ENCODE measurements at regions of chr11 and their contacts with region 1.

Region 1: GRCh38 chr11:102225689-102226568 is 91.4 kb upstream of the BIRC3 start:
- DNase-seq: peak; percentile 87
- H3K4me3 ChIP-seq: no peak overlapping the region
- H3K27ac ChIP-seq: peak overlapping the region; percentile 54
- H3K4me1 ChIP-seq: peaks cover 24% of the 10 kb centered on the region
- H3K27me3 ChIP-seq: no peaks in the 10 kb centered on the region
- CTCF ChIP-seq: no peak
- POLR2A ChIP-seq: peak; percentile 40

Region 2: GRCh38 chr11:102036757-102037156 is 189.2 kb before region 1 on chr11:
- CTCF ChIA-PET with region 1: no interaction called
- POLR2A ChIA-PET with region 1: no interaction called
- dilution Hi-C with region 1: no loop called
- intact Hi-C with region 1: no loop called
- DNase-seq: no peak
- H3K4me3 ChIP-seq: no peak overlapping the region
- H3K27ac ChIP-seq: no peak overlapping the region
- H3K4me1 ChIP-seq: no peaks in the 10 kb centered on the region
- H3K27me3 ChIP-seq: peaks cover 0 to 2% of the 10 kb centered on the region in 2 experiments
- CTCF ChIP-seq: no peak
- POLR2A ChIP-seq: no peak

Region 3: DNA sequence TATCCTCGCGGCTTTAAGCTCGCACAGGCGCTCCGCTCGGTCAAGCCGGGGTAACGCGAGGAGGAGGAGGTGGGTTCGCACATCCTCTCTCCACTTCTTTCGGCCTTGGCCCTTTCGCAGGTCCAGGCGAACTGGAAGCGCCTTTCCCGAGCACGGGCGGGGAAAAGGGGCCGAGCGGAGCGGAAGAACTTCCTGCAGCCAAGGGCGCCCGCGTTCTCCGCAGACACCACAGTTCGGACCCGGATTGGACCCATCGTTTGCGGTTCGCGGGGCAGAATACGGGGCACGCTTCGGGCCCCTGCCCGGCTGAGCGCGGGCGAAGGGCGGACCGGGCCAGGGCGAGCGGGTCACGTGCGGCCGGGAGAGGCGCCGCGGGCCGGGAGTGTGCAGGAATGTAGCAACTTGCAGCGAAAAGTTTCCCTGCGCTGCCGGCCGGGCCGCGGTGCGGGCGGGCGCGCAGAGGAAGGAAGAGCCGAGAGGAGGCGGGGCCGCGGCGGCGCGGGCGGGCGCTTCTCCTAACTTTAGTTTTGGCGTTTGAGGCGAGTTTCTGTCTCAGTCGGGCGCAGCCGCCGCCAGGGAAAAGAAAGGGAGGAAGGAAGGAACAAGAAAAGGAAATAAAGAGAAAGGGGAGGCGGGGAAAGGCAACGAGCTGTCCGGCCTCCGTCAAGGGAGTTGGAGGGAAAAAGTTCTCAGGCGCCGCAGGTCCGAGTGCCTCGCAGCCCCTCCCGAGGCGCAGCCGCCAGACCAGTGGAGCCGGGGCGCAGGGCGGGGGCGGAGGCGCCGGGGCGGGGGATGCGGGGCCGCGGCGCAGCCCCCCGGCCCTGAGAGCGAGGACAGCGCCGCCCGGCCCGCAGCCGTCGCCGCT is 115.8 kb before region 1 on chr11 and contains the start of gene YAP1:
- CTCF ChIA-PET with region 1: interaction called, 5 read pairs
- POLR2A ChIA-PET with region 1: no interaction called
- dilution Hi-C with region 1: no loop called
- intact Hi-C with region 1: loop called (anchors 1 kb)
- DNase-seq: peak; percentile 89
- H3K4me3 ChIP-seq: peak within 1 kb of the TSS; percentile 85 to 99 (median 88)
- H3K27ac ChIP-seq: peak within 1 kb of the TSS; percentile 72
- H3K4me1 ChIP-seq: peaks cover 11% of the 10 kb centered on the region
- H3K27me3 ChIP-seq: peaks cover 2 to 18% of the 10 kb centered on the region in 2 experiments
- CTCF ChIP-seq: no peak
- POLR2A ChIP-seq: no peak
- total RNA-seq, gene YAP1: 36.5 and 48.9 TPM in 2 replicates

Region 4: GRCh38 chr11:102171101-102171500 is 54.8 kb before region 1 on chr11:
- CTCF ChIA-PET with region 1: no interaction called
- POLR2A ChIA-PET with region 1: no interaction called
- dilution Hi-C with region 1: no loop called
- intact Hi-C with region 1: loop called (anchors 2 kb)
- DNase-seq: peak; percentile 50
- H3K4me3 ChIP-seq: no peak overlapping the region
- H3K27ac ChIP-seq: peak overlapping the region; percentile 29
- H3K4me1 ChIP-seq: peaks cover 22% of the 10 kb centered on the region
- H3K27me3 ChIP-seq: no peaks in the 10 kb centered on the region
- CTCF ChIP-seq: no peak
- POLR2A ChIP-seq: no peak

Region 5: GRCh38 chr11:102177974-102178631 is 47.8 kb before region 1 on chr11:
- CTCF ChIA-PET with region 1: no interaction called
- POLR2A ChIA-PET with region 1: no interaction called
- dilution Hi-C with region 1: no loop called
- intact Hi-C with region 1: loop called (anchors 2 kb)
- DNase-seq: peak; percentile 88
- H3K4me3 ChIP-seq: no peak overlapping the region
- H3K27ac ChIP-seq: peak overlapping the region; percentile 74
- H3K4me1 ChIP-seq: peaks cover 12% of the 10 kb centered on the region
- H3K27me3 ChIP-seq: no peaks in the 10 kb centered on the region
- CTCF ChIP-seq: no peak
- POLR2A ChIP-seq: no peak

Region 6: GRCh38 chr11:102268329-102269193 is 42.6 kb after region 1 on chr11:
- CTCF ChIA-PET with region 1: no interaction called
- POLR2A ChIA-PET with region 1: no interaction called
- dilution Hi-C with region 1: no loop called
- intact Hi-C with region 1: loop called (anchors 2 kb)
- DNase-seq: peak; percentile 51
- H3K4me3 ChIP-seq: peak overlapping the region; percentile 5 to 41 (median 7)
- H3K27ac ChIP-seq: no peak overlapping the region
- H3K4me1 ChIP-seq: peaks cover 6% of the 10 kb centered on the region
- H3K27me3 ChIP-seq: peaks cover 11 to 20% of the 10 kb centered on the region in 2 experiments
- CTCF ChIP-seq: peak in 1 of 2 donors; percentile 30
- POLR2A ChIP-seq: no peak

Measured in endothelial cell of umbilical vein (primary cell).